Sigmoid colon (tissue), 7 donors: ENCODE measurements at regions of chr18 and their contacts with region 1.

Region 1: DNA sequence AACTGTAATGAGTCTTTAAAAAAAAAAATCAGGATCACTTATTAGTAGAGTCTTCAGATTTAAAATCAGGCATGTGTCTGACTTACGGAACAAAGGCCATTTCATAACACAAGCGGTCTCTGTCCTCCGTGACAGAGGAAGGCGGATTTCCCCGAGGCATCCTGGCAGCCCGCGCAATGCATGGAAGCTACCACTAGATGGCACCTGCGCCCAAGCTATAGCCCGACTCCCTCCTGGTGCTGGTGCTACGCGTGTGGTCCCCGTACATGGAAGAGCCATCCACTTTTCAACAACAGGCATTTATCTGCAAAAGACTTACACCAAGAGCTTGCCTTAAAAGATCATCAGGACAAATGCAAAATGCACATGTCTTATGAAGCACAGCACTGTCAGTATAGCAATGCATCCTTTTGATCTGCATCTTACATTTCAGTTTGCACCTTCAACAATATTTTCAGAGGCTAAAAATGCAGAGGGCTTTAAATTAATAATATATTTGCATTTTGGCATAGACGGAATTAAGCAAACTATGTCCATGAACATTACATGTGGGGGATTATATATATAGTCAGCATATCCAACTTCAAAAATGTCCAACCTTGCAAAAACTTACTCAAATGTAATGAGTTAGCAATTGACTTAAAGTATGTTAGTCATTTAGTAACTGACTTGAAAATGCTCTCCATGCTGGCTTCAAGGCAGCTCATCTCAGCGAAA is 96.0 kb downstream of the ZNF516 start:
- DNase-seq: peak; percentile 94
- H3K4me3 ChIP-seq: no peak overlapping the region
- H3K27ac ChIP-seq: no peak overlapping the region
- H3K4me1 ChIP-seq: peaks cover 0 to 22% (median 4%) of the 10 kb centered on the region in 4 donors
- H3K27me3 ChIP-seq: no peaks in the 10 kb centered on the region
- CTCF ChIP-seq: peak; percentile 83 to 97 (median 94)
- EP300 ChIP-seq: no peak
- POLR2A ChIP-seq: no peak

Region 2: DNA sequence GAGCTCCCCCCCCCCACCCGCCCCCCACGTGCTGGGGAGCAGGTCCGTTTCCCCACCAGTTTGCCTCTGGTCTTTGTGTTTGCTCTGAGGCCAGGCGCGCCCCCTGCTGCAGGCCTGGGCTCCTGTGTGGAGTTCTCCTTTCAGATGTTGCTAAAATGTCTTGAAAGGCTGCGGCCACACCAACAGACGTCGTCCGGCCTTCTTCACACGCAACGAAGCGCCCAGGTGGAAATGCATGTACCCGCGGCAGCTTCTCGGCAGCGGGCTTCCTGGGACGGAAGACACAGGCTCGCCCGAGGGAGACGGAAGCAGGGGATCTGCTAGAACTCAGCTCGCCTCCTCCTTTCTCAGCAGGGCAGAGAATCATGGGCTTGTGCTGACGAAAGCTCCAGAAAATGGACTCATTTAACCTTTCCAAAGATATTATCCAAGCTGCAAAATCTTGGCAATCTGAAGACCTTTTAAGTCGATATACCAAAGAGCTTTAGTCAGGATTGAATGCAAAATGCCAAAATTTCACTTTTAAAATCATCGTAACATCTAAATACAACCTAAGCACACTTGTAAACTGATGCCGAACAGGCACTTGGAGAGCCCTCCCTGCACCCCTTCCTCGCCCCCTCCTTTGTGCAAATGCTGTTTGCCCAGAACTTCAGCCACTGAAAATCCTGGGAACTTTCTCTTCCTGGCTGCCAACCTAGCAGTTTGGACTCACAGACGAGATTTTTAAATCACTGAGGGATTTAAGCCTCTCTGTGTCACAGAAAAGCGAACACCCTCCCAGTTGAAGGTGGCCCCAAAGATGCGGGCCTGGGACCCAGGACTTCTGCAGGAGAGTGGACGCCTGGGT is 221.5 kb after region 1 on chr18:
- intact Hi-C with region 1: loop called (anchors 1 kb)
- DNase-seq: peak; percentile 88
- H3K4me3 ChIP-seq: peak overlapping the region; percentile 17 to 50 (median 41)
- H3K27ac ChIP-seq: peak overlapping the region; percentile 57 to 77 (median 72)
- H3K4me1 ChIP-seq: peaks cover 0 to 30% (median 29%) of the 10 kb centered on the region in 4 donors
- H3K27me3 ChIP-seq: no peaks in the 10 kb centered on the region
- CTCF ChIP-seq: peak in 3 of 4 experiments; percentile 28 to 65 (median 44)
- EP300 ChIP-seq: no peak
- POLR2A ChIP-seq: no peak

Region 3: GRCh38 chr18:76686737-76687262 is 287.7 kb after region 1 on chr18:
- intact Hi-C with region 1: loop called (anchors 1 kb)
- DNase-seq: peak; percentile 84
- H3K4me3 ChIP-seq: no peak overlapping the region
- H3K27ac ChIP-seq: peak overlapping the region in 3 of 4 donors; percentile 43 to 65 (median 53)
- H3K4me1 ChIP-seq: peaks cover 0 to 17% (median 7%) of the 10 kb centered on the region in 4 donors
- H3K27me3 ChIP-seq: no peaks in the 10 kb centered on the region
- CTCF ChIP-seq: peak; percentile 42 to 66 (median 65)
- EP300 ChIP-seq: no peak
- POLR2A ChIP-seq: no peak

Region 4: DNA sequence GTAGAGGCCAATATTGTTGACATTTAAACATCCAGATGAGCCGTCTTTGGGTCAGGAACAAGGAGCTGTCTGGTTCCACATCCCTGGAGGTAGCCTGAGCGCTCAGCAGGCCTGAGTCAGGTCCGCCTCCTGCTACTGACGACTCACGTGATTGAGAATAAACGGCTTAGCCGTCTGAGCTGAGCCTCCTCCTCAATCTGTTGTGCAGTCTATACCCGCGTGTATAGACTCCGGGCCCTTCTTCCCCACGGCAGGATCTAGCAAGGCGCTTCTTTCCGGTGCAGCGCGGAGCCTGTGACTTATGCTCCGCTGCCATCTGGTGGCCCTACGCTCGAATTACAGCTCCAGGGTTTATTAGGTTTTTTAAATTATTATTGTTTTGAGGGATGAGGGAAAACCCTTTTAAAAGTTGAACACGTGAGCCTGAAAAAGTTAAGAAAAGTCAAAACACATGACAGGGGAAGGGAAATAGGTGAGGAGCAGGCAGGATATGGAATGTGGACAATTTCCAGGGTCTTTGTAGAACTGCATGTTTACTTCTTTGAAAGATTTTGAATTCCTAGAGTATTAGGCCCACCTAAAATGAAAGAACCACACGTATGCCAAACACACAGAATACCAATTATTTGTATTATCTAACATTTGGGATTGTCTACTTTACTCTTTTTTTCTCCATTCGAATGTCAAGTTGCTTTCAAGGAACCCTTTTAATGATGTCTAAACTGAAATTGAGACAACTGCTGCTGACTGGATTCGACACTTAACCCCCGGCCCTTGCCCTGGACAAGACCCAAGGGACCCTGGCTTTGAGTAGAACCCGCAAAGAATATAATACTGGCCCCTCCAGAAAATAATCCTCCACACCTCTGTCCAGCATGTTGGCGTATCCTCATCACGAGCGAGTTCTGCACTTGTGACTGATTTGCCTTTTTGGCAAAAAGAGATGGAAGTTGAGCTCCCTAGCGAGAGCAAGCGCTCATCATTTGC is 310.9 kb after region 1 on chr18:
- intact Hi-C with region 1: loop called (anchors 1 kb)
- DNase-seq: peak; percentile 87
- H3K4me3 ChIP-seq: no peak overlapping the region
- H3K27ac ChIP-seq: no peak overlapping the region
- H3K4me1 ChIP-seq: peaks cover 0 to 4% (median 0%) of the 10 kb centered on the region in 4 donors
- H3K27me3 ChIP-seq: no peaks in the 10 kb centered on the region
- CTCF ChIP-seq: peak; percentile 71 to 92 (median 88)
- EP300 ChIP-seq: no peak
- POLR2A ChIP-seq: no peak